Astrocyte of the cerebellum (primary cell): ENCODE measurements at regions of chr10 and their contacts with region 1.

Region 1: GRCh38 chr10:102831322-102832071 is 5.7 kb downstream of the CYP17A1 start:
- DNase-seq: no peak
- H3K4me3 ChIP-seq: no peak overlapping the region
- CTCF ChIP-seq: no peak

Region 2: GRCh38 chr10:102735065-102735562 is 96.4 kb before region 1 on chr10:
- in situ Hi-C with region 1: loop called (anchors 5 kb)
- DNase-seq: no peak
- H3K4me3 ChIP-seq: no peak overlapping the region
- CTCF ChIP-seq: no peak

Region 3: GRCh38 chr10:102894466-102895213 is 63.1 kb after region 1 on chr10:
- in situ Hi-C with region 1: loop called (anchors 5 kb)
- DNase-seq: no peak
- H3K4me3 ChIP-seq: no peak overlapping the region
- CTCF ChIP-seq: no peak